ENCODE measurements at regions of chr9 and their contacts with region 1.

Region 1: GRCh38 chr9:93111371-93112115 is 15.5 kb downstream of the CARD19 start:
- DNase-seq: no peak
- ATAC-seq: no peak
- H3K4me3 ChIP-seq: no peak overlapping the region
- H3K27ac ChIP-seq: peak overlapping the region in 3 of 10 donors; percentile 31 to 88 (median 70)
- H3K4me1 ChIP-seq: peaks cover 0 to 68% (median 5%) of the 10 kb centered on the region in 9 donors
- H3K27me3 ChIP-seq: no peaks in the 10 kb centered on the region
- CTCF ChIP-seq: no peak

Region 2: DNA sequence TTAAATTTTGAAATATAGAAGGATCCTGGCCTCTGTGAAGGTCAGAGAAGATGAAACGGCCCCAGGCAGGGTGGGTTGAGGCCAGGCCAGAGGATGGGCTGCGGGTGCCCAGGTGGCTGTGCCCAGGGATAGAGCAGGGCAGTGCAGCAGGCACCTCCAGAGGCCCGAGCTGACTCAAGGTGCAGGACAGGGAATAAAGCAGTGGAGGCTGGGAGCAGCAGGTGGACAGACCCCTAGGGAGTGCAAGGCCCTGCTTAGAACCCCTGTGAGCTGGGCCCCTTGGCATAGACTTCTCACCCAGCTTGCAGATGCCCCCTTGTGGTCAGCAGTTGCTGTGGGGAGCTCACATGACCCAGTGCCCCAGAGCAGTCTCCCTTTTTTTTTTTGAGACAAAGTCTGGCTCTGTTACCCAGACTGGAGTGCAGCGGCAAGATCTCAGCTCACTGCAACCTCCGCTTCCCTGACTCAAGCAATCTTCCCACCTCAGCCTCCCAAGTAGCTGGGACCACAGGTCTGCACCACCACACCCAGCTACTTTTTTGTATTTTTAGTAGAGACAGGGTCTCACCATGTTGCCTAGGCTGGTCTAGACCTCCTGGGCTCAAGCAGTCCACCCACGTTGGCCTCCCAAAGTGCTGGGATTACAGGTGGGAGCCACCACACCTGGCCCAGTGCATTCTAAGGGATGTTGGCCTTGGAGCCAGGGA is 191.2 kb after region 1 on chr9:
- intact Hi-C with region 1: loop called in 5 of 10 experiments (anchors 2 to 10 kb)
- DNase-seq: peak in 1 of 2 donors; percentile 45
- ATAC-seq: peak in 4 of 8 donors; percentile 21 to 57 (median 32)
- H3K4me3 ChIP-seq: no peak overlapping the region
- H3K27ac ChIP-seq: no peak overlapping the region
- H3K4me1 ChIP-seq: peaks cover 9 to 71% (median 30%) of the 10 kb centered on the region in 9 donors
- H3K27me3 ChIP-seq: no peaks in the 10 kb centered on the region
- CTCF ChIP-seq: peak in 8 of 9 donors; percentile 17 to 71 (median 58)

Region 3: DNA sequence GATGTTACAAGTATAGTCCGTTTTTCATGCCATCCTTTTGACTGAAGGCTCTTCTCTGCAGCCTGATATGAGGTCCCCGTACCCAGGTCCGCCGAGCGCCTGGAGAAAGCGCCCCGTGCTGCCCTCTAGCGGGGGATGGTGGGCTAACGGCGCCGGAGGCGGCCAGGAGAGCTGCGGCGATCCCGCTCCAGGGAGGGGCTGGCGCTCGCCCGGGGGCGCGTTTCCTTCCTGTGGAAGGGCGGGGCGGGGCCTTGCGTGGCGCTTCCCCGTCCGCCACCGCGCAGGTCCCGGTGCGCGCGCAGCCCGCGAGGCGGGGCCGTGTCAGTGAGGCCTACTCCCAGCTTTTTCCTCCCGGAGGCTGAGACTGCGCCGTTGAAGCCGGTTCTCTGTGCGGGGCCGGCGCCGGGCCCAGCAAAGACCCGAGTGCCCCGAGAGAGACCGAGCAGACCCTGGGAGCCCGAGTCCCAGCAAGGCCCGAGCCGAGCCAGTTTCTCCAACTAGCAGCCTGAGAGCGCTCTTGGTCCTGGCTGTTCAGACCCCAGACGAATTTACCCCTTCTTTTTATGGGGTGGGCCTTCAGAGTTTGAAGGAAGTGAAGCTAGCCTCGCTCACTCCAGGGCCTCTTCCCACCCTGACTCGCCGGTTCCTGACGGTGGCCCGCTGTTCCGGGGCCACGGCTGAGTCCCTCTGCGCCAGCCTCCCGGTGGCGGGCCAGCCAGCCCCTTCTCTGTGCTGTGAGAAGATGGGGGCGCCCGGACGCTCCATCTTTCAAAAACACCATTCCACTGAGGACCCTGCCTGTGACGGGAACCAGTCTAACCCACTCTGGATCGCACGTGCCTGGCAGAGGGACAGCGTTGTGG is 455.1 kb after region 1 on chr9:
- intact Hi-C with region 1: loop called in 1 of 10 experiments (anchors 10 kb)
- DNase-seq: peak; percentile 98 to 99
- ATAC-seq: peak; percentile 98 to 99 (median 99)
- H3K4me3 ChIP-seq: peak overlapping the region; percentile 31 to 76 (median 64)
- H3K27ac ChIP-seq: peak overlapping the region; percentile 83 to 99 (median 94)
- H3K4me1 ChIP-seq: peaks cover 4 to 27% (median 14%) of the 10 kb centered on the region in 9 donors
- H3K27me3 ChIP-seq: no peaks in the 10 kb centered on the region
- CTCF ChIP-seq: peak; percentile 93 to 100 (median 98)

Measured in heart right ventricle (tissue), 16 donors.